ENCODE measurements at regions of chr12 and their contacts with region 1.

Region 1: GRCh38 chr12:18224745-18225144 is 36.6 kb upstream of the PIK3C2G start:
- DNase-seq: peak; percentile 4
- ATAC-seq: no peak
- H3K4me3 ChIP-seq: no peak overlapping the region
- H3K27ac ChIP-seq: no peak overlapping the region
- H3K4me1 ChIP-seq: no peaks in the 10 kb centered on the region
- H3K27me3 ChIP-seq: no peaks in the 10 kb centered on the region
- CTCF ChIP-seq: peak; percentile 31; the same call in 1 of the 2 replicates

Region 2: DNA sequence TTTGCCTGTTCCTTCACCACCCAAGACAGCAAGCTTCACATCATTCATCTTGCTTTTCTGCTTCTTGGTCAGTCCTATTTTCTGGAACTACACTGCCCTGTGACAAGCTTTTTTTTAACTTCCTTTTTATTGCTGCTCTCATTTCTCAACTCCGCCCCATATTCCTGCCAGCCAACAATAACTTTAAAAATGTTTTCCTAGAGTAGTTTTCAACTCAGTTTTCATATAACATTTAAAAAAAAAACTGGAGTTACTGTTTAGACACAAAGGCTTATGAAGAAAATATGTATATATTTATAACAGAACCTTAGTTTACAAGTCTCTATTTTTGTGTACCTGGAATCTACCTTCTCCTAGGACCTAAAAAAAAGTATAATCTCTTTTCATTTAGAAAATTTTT is 134.7 kb before region 1 on chr12 and contains the start of gene RERGL:
- CTCF ChIA-PET with region 1: no interaction called
- POLR2A ChIA-PET with region 1: no interaction called
- in situ Hi-C with region 1: no loop called
- intact Hi-C with region 1: no loop called
- DNase-seq: no peak
- ATAC-seq: no peak
- H3K4me3 ChIP-seq: no peak within 1 kb of the TSS
- H3K27ac ChIP-seq: no peak within 1 kb of the TSS
- H3K4me1 ChIP-seq: no peaks in the 10 kb centered on the region
- H3K27me3 ChIP-seq: no peaks in the 10 kb centered on the region
- CTCF ChIP-seq: no peak
- total RNA-seq, gene RERGL: not detected

Region 3: GRCh38 chr12:18139989-18140596 is 84.7 kb before region 1 on chr12:
- CTCF ChIA-PET with region 1: no interaction called
- POLR2A ChIA-PET with region 1: no interaction called
- in situ Hi-C with region 1: no loop called
- intact Hi-C with region 1: loop called (anchors 2 kb)
- DNase-seq: no peak
- ATAC-seq: no peak
- H3K4me3 ChIP-seq: no peak overlapping the region
- H3K27ac ChIP-seq: no peak overlapping the region
- H3K4me1 ChIP-seq: no peaks in the 10 kb centered on the region; the same call in 1 of the 2 replicates
- H3K27me3 ChIP-seq: no peaks in the 10 kb centered on the region
- CTCF ChIP-seq: peak; percentile 30; the same call in 1 of the 2 replicates

Region 4: DNA sequence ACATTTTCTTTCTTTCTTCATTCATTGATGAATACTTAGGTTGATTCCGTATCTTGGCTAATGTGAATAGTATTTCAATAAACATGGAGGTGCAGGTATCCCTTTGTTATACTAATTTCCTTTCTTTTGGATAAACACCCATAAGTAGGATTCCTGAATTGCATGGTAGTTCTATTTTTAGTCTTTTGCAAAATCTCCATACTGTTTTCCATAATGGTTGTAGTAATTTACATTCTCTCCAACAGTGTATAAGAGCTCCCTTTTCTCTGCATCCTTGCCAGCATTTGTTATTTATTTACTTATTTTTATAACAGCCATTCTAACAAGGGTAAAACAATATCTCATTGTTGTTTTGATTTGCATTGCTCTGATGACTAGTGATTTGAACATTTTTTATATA is 73.2 kb after region 1 on chr12:
- CTCF ChIA-PET with region 1: no interaction called
- POLR2A ChIA-PET with region 1: no interaction called
- in situ Hi-C with region 1: no loop called
- intact Hi-C with region 1: no loop called
- DNase-seq: no peak
- ATAC-seq: no peak
- H3K4me3 ChIP-seq: no peak overlapping the region
- H3K27ac ChIP-seq: no peak overlapping the region
- H3K4me1 ChIP-seq: no peaks in the 10 kb centered on the region
- H3K27me3 ChIP-seq: no peaks in the 10 kb centered on the region
- CTCF ChIP-seq: no peak

Measured in Panc1 (cell line).